HCT116 (cell line): ENCODE measurements at regions of chr7 and their contacts with region 1.

Region 1: DNA sequence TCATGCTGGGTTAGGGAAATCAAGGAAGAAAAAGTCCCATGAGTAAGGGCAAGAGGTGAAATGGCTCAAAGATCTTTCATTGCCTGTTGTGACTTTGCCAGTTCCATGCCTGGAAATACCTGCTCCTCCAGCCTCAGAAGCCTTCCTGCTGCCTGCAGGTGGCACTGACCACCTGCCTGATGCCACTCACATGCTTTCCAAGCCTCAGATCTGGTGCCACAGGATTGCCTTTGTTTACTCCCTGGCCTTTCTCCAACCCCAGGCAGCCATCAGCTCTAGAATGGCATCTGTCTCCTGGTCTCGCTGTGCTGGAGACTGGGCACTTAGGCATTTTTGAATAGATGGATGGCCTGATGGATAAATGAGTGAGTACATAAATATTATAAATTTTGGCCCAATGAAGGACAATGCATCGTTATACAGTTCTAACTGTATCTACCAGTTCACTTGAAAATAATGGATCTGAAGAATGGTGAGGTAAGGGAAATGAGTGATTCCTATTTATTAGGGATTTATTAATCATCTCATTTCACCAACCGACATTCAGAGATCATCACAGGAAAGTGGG is 657.2 kb downstream of the INHBA start:
- DNase-seq: peak; percentile 22
- ATAC-seq: peak; percentile 79
- H3K4me3 ChIP-seq: no peak overlapping the region
- H3K27ac ChIP-seq: no peak overlapping the region
- H3K4me1 ChIP-seq: peaks cover 0 to 5% of the 10 kb centered on the region in 2 experiments; a peak in 1 of 4 replicates
- H3K27me3 ChIP-seq: no peaks in the 10 kb centered on the region
- CTCF ChIP-seq: peak; percentile 29 to 51 (median 47); a peak in 4 of 6 replicates
- POLR2A ChIP-seq: no peak
- RAD21 ChIP-seq: peak; percentile 85

Region 2: DNA sequence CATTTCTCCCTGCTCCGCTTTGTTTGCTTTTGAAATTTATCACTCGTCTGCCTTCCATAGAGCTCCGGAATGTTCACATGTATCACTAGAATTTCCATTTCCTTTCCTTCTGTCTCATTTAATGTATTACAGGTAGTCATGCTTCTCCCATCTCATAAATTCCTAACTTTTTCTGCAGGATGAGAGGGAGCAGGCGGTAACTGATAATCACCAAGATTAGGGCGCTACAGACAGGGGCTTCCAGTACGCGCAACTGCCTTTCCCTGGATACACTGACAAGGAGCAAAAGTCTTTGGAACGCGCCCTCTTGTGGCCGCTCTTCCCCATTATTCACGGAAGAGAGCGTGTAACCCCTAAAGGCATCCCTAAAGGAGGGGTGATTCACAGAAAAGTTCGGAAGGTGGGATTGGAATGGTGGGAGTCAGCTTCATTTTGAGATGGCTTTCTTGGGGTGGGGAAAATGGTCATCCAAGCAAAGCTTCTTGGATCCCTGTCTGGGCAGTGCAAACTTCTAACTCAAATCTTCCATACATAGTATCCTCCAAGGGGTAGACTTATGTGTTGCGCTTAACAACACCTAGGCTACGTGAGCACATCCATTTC is 650.8 kb after region 1 on chr7:
- CTCF ChIA-PET with region 1: no interaction called
- POLR2A ChIA-PET with region 1: no interaction called
- RAD21 ChIA-PET with region 1: no interaction called
- intact Hi-C with region 1: loop called (anchors 1 kb)
- DNase-seq: peak; percentile 39
- ATAC-seq: peak; percentile 90
- H3K4me3 ChIP-seq: no peak overlapping the region
- H3K27ac ChIP-seq: no peak overlapping the region
- H3K4me1 ChIP-seq: no peaks in the 10 kb centered on the region; a peak in 1 of 4 replicates
- H3K27me3 ChIP-seq: no peaks in the 10 kb centered on the region
- CTCF ChIP-seq: peak; percentile 30 to 75 (median 60); a peak in 5 of 6 replicates
- POLR2A ChIP-seq: no peak
- RAD21 ChIP-seq: peak; percentile 63

Region 3: GRCh38 chr7:41705109-41705901 is 659.7 kb after region 1 on chr7:
- CTCF ChIA-PET with region 1: interaction called, 16 read pairs
- POLR2A ChIA-PET with region 1: no interaction called
- RAD21 ChIA-PET with region 1: no interaction called
- intact Hi-C with region 1: loop called (anchors 1 kb)
- DNase-seq: no peak
- ATAC-seq: peak; percentile 98
- H3K4me3 ChIP-seq: peak overlapping the region; percentile 41 to 52
- H3K27ac ChIP-seq: no peak overlapping the region; the same call in 1 of the 2 replicates
- H3K4me1 ChIP-seq: peaks cover 2 to 7% of the 10 kb centered on the region in 2 experiments; a peak in 2 of 4 replicates
- H3K27me3 ChIP-seq: no peaks in the 10 kb centered on the region
- CTCF ChIP-seq: peak; percentile 45 to 59 (median 57); a peak in 5 of 6 replicates
- POLR2A ChIP-seq: no peak
- RAD21 ChIP-seq: peak; percentile 78